SK-N-SH (cell line): ENCODE measurements at regions of chr10 and their contacts with region 1.

Region 1: GRCh38 chr10:36779234-36779846 is 346.1 kb upstream of the ANKRD30A start:
- DNase-seq: peak; percentile 74
- H3K4me3 ChIP-seq: peak overlapping the region in 1 of 2 experiments; percentile 28; a peak in 1 of 4 replicates
- H3K27ac ChIP-seq: no peak overlapping the region
- H3K4me1 ChIP-seq: peaks cover 0 to 13% of the 10 kb centered on the region in 2 experiments; a peak in 2 of 4 replicates
- H3K27me3 ChIP-seq: no peaks in the 10 kb centered on the region
- CTCF ChIP-seq: peak; percentile 85
- EP300 ChIP-seq: no peak
- RAD21 ChIP-seq: peak; percentile 96

Region 2: DNA sequence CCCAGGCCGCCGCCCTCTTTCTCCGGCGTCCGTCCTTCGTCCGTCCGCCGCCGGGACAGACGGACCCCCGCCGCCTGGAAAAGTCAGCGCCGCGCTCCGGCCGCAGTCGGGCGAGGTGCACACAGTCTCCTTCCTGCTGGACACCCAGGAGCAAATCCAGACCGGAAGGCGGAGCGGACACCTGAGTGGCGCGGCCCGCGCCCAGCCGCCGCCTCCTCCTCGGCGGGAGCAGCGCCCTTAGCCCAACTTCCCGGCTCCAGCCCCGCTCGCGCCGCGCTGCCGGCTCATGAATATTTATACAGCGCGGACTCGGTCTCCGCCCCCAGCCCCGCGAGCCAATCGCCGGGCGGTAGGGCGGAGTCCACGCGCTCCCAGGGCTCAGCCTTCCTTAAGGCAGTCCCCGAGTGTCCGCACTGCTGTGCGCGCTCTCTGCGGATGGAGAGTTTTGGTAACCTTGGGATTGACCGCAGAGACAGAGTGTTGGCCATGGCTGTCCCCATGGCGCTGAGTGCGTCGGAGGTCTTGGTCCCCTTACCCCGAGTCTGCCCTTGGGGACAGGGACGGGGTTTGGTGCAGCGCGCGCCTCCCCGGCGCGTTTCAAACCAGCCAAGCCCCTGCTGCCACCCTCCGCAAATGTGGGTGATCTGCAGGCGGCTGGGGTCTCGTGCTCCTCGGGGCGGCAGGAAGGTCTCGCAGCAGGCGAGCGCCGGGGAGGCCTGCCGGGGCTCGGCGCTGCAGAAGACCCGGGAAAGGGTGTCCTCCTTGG is 1137.1 kb before region 1 on chr10 and contains the start of gene FZD8:
- CTCF ChIA-PET with region 1: interaction called, 55 read pairs
- POLR2A ChIA-PET with region 1: no interaction called
- DNase-seq: peak; percentile 92
- H3K4me3 ChIP-seq: peak within 1 kb of the TSS; percentile 68 to 88
- H3K27ac ChIP-seq: no peak within 1 kb of the TSS; a peak in 1 of 4 replicates
- H3K4me1 ChIP-seq: peaks cover 0 to 25% of the 10 kb centered on the region in 2 experiments; a peak in 1 of 4 replicates
- H3K27me3 ChIP-seq: no peaks in the 10 kb centered on the region; the same call in 1 of the 2 replicates
- CTCF ChIP-seq: peak; percentile 34
- EP300 ChIP-seq: no peak
- RAD21 ChIP-seq: no peak
- polyA plus RNA-seq, gene FZD8: 1.4 TPM in 2 replicates

Region 3: GRCh38 chr10:36759141-36759805 is 20.1 kb before region 1 on chr10:
- CTCF ChIA-PET with region 1: interaction called, 10 read pairs
- POLR2A ChIA-PET with region 1: no interaction called
- DNase-seq: no peak
- H3K4me3 ChIP-seq: no peak overlapping the region
- H3K27ac ChIP-seq: peak overlapping the region in 1 of 2 experiments; percentile 39; a peak in 2 of 4 replicates
- H3K4me1 ChIP-seq: no peaks in the 10 kb centered on the region; a peak in 1 of 4 replicates
- H3K27me3 ChIP-seq: no peaks in the 10 kb centered on the region
- CTCF ChIP-seq: no peak
- EP300 ChIP-seq: peak in 1 of 2 experiments; percentile 45; a peak in 1 of 4 replicates
- RAD21 ChIP-seq: no peak

Region 4: GRCh38 chr10:36880898-36881297 is 101.6 kb after region 1 on chr10:
- CTCF ChIA-PET with region 1: interaction called, 15 read pairs
- POLR2A ChIA-PET with region 1: no interaction called
- DNase-seq: peak; percentile 23
- H3K4me3 ChIP-seq: no peak overlapping the region
- H3K27ac ChIP-seq: no peak overlapping the region
- H3K4me1 ChIP-seq: no peaks in the 10 kb centered on the region
- H3K27me3 ChIP-seq: peaks cover 5% of the 10 kb centered on the region; the same call in 1 of the 2 replicates
- CTCF ChIP-seq: peak; percentile 61
- EP300 ChIP-seq: no peak
- RAD21 ChIP-seq: peak; percentile 73